ENCODE measurements at regions of chr18 and their contacts with region 1.

Region 1: GRCh38 chr18:36688020-36688965 is 140.5 kb downstream of the TPGS2 start:
- DNase-seq: peak in 3 of 5 donors; percentile 32 to 50 (median 35)
- ATAC-seq: peak in 3 of 4 donors; percentile 39 to 61 (median 54)
- H3K4me3 ChIP-seq: no peak overlapping the region
- H3K27ac ChIP-seq: no peak overlapping the region
- H3K4me1 ChIP-seq: peaks cover 0 to 9% (median 0%) of the 10 kb centered on the region in 12 donors
- H3K27me3 ChIP-seq: no peaks in the 10 kb centered on the region
- CTCF ChIP-seq: peak; percentile 68 to 86 (median 79)
- POLR2A ChIP-seq: no peak

Region 2: GRCh38 chr18:36628435-36629137 is 59.7 kb before region 1 on chr18:
- intact Hi-C with region 1: loop called in 1 of 10 experiments (anchors 10 kb)
- DNase-seq: no peak
- ATAC-seq: peak in 3 of 4 donors; percentile 7 to 42 (median 11)
- H3K4me3 ChIP-seq: no peak overlapping the region
- H3K27ac ChIP-seq: peak overlapping the region; percentile 45 to 93 (median 82)
- H3K4me1 ChIP-seq: peaks cover 0 to 82% (median 23%) of the 10 kb centered on the region in 12 donors
- H3K27me3 ChIP-seq: no peaks in the 10 kb centered on the region
- CTCF ChIP-seq: no peak
- POLR2A ChIP-seq: no peak

Region 3: DNA sequence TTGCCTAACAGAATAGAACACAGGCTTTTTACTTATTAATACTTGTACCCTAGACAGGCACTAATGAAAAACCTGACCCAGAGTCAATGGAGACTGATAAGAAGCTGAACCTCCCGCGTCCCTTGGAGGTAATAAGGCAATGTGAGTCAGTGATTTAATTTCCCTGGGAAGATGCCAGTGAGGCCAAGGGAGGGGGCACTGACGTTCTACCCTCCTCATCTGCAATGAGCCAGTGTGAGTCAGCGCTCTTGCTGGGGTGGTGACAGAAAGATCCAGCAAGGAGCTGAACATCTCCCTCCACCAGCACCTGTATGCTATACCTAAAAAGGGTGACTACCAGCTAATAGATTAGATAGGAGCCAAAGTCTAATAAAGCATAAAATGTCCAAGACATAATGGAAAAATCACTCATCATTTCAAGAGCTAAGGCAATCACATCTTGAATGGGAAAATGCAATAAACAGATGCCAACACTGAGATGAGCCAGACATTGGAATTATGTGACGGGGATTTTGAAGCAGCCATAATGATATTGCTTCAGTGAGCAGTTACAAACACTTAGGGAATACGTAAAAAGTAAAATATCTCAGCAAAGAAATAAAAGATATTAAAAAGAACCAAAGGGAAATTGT is 23.6 kb after region 1 on chr18:
- intact Hi-C with region 1: no loop called
- DNase-seq: peak; percentile 50 to 87 (median 63)
- ATAC-seq: peak; percentile 72 to 90 (median 87)
- H3K4me3 ChIP-seq: no peak overlapping the region
- H3K27ac ChIP-seq: peak overlapping the region in 10 of 12 donors; percentile 21 to 90 (median 62)
- H3K4me1 ChIP-seq: peaks cover 0 to 46% (median 13%) of the 10 kb centered on the region in 12 donors
- H3K27me3 ChIP-seq: peaks cover 0 to 2% (median 0%) of the 10 kb centered on the region in 9 donors
- CTCF ChIP-seq: no peak
- POLR2A ChIP-seq: no peak

Region 4: GRCh38 chr18:36745219-36745975 is 57.1 kb after region 1 on chr18:
- intact Hi-C with region 1: loop called in 1 of 10 experiments (anchors 5 kb)
- DNase-seq: no peak
- ATAC-seq: peak; percentile 15 to 35 (median 31)
- H3K4me3 ChIP-seq: no peak overlapping the region
- H3K27ac ChIP-seq: no peak overlapping the region
- H3K4me1 ChIP-seq: no peaks in the 10 kb centered on the region
- H3K27me3 ChIP-seq: no peaks in the 10 kb centered on the region
- CTCF ChIP-seq: no peak
- POLR2A ChIP-seq: no peak

Region 5: GRCh38 chr18:36757081-36757480 is 68.8 kb after region 1 on chr18:
- intact Hi-C with region 1: loop called in 8 of 10 experiments (anchors 2 to 5 kb)
- DNase-seq: no peak
- ATAC-seq: peak in 2 of 4 donors; percentile 46 to 51
- H3K4me3 ChIP-seq: no peak overlapping the region
- H3K27ac ChIP-seq: no peak overlapping the region
- H3K4me1 ChIP-seq: peaks cover 0 to 23% (median 8%) of the 10 kb centered on the region in 12 donors
- H3K27me3 ChIP-seq: no peaks in the 10 kb centered on the region
- CTCF ChIP-seq: peak; percentile 40 to 70 (median 55)
- POLR2A ChIP-seq: no peak

Region 6: DNA sequence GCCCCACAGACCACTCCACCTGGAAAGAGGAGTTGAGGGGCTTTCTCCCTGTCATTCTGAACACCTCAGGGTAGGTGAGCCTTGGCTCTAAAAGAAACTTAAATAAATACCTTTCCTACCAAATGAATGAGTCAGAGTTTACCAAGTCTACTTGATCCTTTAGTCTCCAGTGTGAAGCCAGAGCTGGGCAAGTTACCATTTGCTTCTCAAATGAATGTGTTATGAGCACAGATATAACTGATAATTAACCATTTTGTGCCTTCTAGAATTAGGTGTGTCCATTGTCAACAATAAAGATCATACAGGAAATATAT is 488.3 kb after region 1 on chr18:
- intact Hi-C with region 1: no loop called
- DNase-seq: no peak
- ATAC-seq: no peak
- H3K4me3 ChIP-seq: no peak overlapping the region
- H3K27ac ChIP-seq: no peak overlapping the region
- H3K4me1 ChIP-seq: no peaks in the 10 kb centered on the region
- H3K27me3 ChIP-seq: no peaks in the 10 kb centered on the region
- CTCF ChIP-seq: no peak
- POLR2A ChIP-seq: no peak